ENCODE measurements at regions of chr6 and their contacts with region 1.

Region 1: GRCh38 chr6:53524455-53524815 is 20.5 kb downstream of the GCLC start:
- DNase-seq: no peak
- ATAC-seq: no peak
- H3K4me3 ChIP-seq: no peak overlapping the region
- H3K27ac ChIP-seq: peak overlapping the region in 3 of 12 donors; percentile 9 to 41 (median 19)
- H3K4me1 ChIP-seq: peaks cover 0 to 71% (median 29%) of the 10 kb centered on the region in 12 donors
- H3K27me3 ChIP-seq: no peaks in the 10 kb centered on the region
- CTCF ChIP-seq: no peak
- POLR2A ChIP-seq: no peak

Region 2: DNA sequence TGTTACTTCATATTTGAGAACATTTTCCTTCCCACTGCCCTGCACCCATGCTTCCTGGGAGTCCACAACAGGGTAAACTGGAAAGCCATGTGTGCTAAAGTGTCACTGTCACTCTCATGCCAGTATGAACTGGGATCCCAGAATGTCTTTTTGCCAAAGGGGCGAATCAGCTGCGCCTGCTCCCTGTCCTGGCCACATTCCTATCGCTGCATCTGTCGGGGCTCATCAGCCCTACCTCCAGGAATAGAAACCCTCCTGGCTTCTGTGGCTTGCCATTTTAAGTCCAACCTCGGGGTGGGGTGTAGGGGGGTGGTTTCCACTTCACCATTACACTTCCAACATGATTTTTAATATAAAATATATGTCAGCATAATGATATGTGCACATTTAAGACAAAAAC is 140.2 kb after region 1 on chr6:
- intact Hi-C with region 1: loop called in 1 of 10 experiments (anchors 5 kb)
- DNase-seq: peak; percentile 71 to 87 (median 78)
- ATAC-seq: peak; percentile 83 to 91 (median 86)
- H3K4me3 ChIP-seq: peak overlapping the region; percentile 11 to 62 (median 56)
- H3K27ac ChIP-seq: peak overlapping the region; percentile 63 to 95 (median 90)
- H3K4me1 ChIP-seq: peaks cover 0 to 26% (median 0%) of the 10 kb centered on the region in 12 donors
- H3K27me3 ChIP-seq: peaks cover 0 to 5% (median 0%) of the 10 kb centered on the region in 9 donors
- CTCF ChIP-seq: no peak
- POLR2A ChIP-seq: no peak

Measured in heart left ventricle (tissue), 16 donors.